ENCODE measurements at regions of chr17 and their contacts with region 1.

Region 1: DNA sequence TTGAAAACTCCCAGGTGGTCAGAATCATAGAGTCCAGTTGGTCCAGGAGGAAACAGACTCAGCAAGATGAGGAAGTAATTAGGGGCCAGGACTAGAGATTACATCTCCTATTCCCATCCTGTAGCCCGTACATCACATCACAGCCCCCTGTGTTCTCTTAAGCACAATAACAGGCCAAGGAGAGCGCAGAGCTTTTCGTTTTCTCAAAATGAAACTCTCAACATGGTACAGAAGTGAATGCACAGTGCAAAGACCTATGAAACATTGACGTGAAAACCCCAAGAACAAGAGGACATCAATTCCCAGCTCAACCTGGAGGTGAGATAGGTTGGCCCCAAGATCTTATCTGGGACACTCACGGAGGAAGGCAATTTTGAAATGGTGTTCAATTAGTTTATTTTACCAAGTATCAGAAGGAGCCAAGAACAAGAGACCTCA is 9.0 kb downstream of the PIK3R5 start:
- DNase-seq: peak; percentile 67
- H3K4me3 Mint-ChIP-seq: peak overlapping the region; percentile 41
- H3K27ac Mint-ChIP-seq: peak overlapping the region; percentile 84
- H3K4me1 Mint-ChIP-seq: peaks cover 88% of the 10 kb centered on the region
- H3K27me3 Mint-ChIP-seq: no peaks in the 10 kb centered on the region

Region 2: GRCh38 chr17:8922451-8922850 is 34.0 kb before region 1 on chr17:
- intact Hi-C with region 1: loop called (anchors 1 kb)
- DNase-seq: peak; percentile 43
- H3K4me3 Mint-ChIP-seq: peak overlapping the region; percentile 43
- H3K27ac Mint-ChIP-seq: peak overlapping the region; percentile 90
- H3K4me1 Mint-ChIP-seq: peaks cover 10% of the 10 kb centered on the region
- H3K27me3 Mint-ChIP-seq: no peaks in the 10 kb centered on the region

Region 3: DNA sequence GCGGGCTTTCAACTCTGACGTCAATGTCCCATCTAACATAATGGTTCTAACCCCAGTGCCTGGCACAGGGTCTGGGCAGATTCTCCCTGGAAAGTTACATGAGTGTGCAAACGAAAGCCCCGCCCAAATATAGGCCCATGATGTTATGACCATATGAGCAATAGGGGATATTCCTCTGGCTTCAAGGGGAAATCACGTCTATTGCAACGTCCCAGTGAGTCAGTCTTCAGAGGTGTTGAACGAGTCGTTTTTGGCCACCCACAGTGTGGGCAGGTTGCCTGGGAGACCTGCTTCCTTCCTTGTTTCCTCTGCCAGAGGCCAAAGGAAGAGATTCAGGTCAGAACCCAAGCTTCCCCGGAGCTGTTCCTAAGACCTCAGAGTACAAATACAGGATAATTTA is 21.3 kb before region 1 on chr17:
- intact Hi-C with region 1: loop called (anchors 1 kb)
- DNase-seq: peak; percentile 79
- H3K4me3 Mint-ChIP-seq: peak overlapping the region; percentile 74
- H3K27ac Mint-ChIP-seq: peak overlapping the region; percentile 97
- H3K4me1 Mint-ChIP-seq: peaks cover 57% of the 10 kb centered on the region
- H3K27me3 Mint-ChIP-seq: no peaks in the 10 kb centered on the region

Region 4: DNA sequence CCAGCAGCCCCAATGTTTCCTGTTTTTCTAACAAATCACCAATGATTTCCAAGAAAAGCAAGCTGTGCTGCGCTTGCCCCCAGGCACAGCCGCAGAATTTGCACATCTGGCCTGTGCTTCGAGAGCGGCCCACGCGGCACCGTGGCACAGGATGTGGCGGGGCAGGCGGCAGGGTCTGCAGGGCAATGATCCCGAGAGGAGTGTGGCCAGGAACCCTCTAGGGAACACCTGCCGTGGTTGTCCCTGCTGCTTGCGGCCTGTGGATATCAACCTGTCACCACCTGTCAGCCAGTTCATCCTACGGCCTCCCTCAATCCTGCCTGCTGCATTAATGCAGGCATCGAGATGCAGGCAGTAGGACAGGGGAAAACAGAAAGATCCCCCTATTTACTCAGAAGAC is 15.0 kb before region 1 on chr17:
- intact Hi-C with region 1: loop called (anchors 1 kb)
- DNase-seq: peak; percentile 92
- H3K4me3 Mint-ChIP-seq: peak overlapping the region; percentile 79
- H3K27ac Mint-ChIP-seq: peak overlapping the region; percentile 98
- H3K4me1 Mint-ChIP-seq: peaks cover 68% of the 10 kb centered on the region
- H3K27me3 Mint-ChIP-seq: no peaks in the 10 kb centered on the region